ENCODE measurements at regions of chr9 and their contacts with region 1.

Region 1: DNA sequence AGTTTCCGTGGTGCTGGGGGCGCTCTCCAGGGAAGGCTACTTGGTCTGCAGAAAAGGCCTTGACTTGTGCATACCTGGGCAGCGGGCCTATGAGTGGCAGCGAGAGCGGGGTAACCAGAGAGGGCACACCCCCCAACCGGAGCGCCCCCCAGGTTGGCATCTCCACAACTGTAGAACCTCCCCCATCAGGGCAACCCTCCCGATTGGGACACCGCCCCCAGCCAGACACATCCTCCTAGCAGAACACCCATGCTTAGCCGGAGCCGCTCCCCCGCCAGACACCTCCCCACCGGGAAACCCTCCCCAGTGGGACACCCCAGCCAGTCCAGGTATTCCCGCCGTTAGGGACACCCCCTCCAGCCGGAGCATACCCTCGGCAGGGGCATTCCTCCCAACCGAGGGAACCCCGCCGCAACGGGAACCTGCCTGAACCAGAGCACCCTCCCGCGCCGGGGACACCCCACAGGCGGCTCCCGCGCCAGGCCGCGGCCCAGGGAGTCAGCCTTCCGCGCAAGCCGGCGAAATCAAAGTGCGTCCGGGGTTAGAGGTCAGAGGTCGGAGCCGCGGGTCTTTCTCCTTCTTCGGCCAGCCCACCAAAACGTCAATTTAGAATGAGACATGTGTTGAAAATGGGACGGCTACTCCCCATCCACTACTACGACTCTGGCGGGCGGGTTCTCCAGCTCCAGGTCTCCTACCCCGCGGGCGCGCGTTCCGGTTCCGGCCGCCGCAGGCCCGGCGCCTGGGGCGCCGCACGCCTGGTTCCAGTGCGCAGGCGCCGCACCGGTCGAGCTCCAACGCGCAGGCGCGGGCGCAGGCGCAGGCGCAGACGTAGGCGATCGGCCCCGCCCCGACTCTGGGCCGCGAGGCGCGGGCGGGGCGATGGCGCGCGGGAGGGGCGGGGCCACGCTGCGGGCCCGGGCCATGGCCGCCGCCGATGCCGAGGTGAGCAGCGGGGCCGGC is at the start of gene EHMT1:
- DNase-seq: peak; percentile 83 to 95 (median 89)
- ATAC-seq: peak; percentile 65 to 86 (median 84)
- H3K4me3 ChIP-seq: peak within 1 kb of the TSS; percentile 77 to 100 (median 90)
- H3K27ac ChIP-seq: peak within 1 kb of the TSS; percentile 88 to 96 (median 92)
- H3K4me1 ChIP-seq: peaks cover 4 to 56% (median 39%) of the 10 kb centered on the region in 12 donors
- H3K27me3 ChIP-seq: no peaks in the 10 kb centered on the region
- CTCF ChIP-seq: peak in 1 of 12 donors; percentile 6
- POLR2A ChIP-seq: peak in 1 of 2 donors; percentile 58
- total RNA-seq, gene EHMT1: 27.8 to 55.9 (median 32.0) TPM

Region 2: GRCh38 chr9:136694236-136694942 is 924.0 kb before region 1 on chr9:
- intact Hi-C with region 1: no loop called
- DNase-seq: peak in 2 of 5 donors; percentile 64 to 77
- ATAC-seq: peak in 3 of 4 donors; percentile 43 to 57 (median 50)
- H3K4me3 ChIP-seq: no peak overlapping the region
- H3K27ac ChIP-seq: no peak overlapping the region
- H3K4me1 ChIP-seq: peaks cover 3 to 51% (median 30%) of the 10 kb centered on the region in 12 donors
- H3K27me3 ChIP-seq: no peaks in the 10 kb centered on the region
- CTCF ChIP-seq: peak; percentile 60 to 81 (median 73)
- POLR2A ChIP-seq: no peak

Region 3: DNA sequence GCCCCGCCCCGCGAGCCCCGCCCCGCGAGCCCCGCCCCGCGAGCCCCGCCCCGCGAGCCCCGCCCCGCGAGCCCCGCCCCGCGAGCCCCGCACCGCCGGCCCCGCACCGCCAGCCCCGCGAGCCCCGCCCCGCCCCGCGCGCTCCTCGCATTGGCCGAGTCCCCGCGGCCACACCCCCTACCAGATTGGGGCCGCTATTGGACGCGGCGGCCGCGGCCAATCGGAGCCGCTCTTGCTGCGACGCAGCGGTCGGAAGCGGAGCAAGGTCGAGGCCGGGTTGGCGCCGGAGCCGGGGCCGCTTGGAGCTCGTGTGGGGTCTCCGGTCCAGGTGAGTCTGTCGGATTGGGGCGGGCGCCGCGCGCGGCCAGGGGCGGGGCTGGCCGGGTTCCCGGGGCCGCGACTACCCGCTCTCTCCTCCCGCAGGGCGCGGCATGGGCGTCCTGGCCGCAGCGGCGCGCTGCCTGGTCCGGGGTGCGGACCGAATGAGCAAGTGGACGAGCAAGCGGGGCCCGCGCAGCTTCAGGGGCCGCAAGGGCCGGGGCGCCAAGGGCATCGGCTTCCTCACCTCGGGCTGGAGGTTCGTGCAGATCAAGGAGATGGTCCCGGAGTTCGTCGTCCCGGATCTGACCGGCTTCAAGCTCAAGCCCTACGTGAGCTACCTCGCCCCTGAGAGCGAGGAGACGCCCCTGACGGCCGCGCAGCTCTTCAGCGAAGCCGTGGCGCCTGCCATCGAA is 66.6 kb before region 1 on chr9 and contains the start of gene MRPL41:
- intact Hi-C with region 1: loop called in 1 of 10 experiments (anchors 2 kb)
- DNase-seq: peak; percentile 90 to 96 (median 94)
- ATAC-seq: peak; percentile 63 to 84 (median 77)
- H3K4me3 ChIP-seq: peak within 1 kb of the TSS; percentile 61 to 99 (median 81)
- H3K27ac ChIP-seq: peak within 1 kb of the TSS; percentile 84 to 99 (median 95)
- H3K4me1 ChIP-seq: peaks cover 0 to 35% (median 14%) of the 10 kb centered on the region in 12 donors
- H3K27me3 ChIP-seq: no peaks in the 10 kb centered on the region
- CTCF ChIP-seq: no peak
- POLR2A ChIP-seq: peak; percentile 96
- total RNA-seq, gene MRPL41: 118 to 389 (median 196) TPM

Region 4: DNA sequence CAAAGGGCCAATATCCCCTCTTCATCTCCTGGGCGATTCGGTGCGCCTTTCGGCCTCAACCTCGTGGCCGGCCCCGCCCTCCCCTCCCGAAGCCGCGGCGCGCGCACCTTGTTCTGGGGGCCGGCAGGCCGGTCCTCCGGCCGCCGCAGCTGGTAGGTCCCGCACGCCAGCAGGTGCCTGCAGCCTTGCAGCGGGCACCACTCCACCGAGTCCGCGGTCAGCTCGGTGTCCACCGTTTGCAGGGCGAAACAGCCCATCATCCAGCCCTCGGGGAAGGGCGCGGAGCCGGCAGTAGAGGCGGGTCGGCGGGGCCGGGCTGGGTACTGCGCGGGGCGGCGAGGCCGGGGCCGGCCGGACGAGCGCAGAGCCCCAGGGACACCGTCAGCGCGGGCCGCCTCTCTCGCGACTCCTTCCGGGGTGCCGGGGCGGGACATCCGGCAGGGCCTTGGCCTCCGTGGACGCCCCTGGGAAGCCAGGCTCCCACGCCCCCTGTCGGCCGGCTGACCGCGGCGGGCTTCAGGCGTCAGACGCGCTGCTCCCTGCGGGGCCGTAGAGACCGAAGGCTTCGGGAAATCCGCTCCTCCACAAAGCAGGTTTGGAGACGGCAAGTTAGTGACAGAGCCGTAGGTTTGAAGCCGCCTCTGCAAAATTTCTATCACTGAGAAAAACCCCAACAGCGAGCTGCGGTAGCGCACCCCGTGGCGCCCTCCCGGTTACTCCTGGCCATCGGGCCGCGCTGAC is 39.7 kb before region 1 on chr9 and contains the start of gene DPH7:
- intact Hi-C with region 1: loop called in 2 of 10 experiments (anchors 2 to 5 kb)
- DNase-seq: peak; percentile 96 to 99 (median 97)
- ATAC-seq: peak; percentile 83 to 95 (median 93)
- H3K4me3 ChIP-seq: peak within 1 kb of the TSS; percentile 63 to 99 (median 82)
- H3K27ac ChIP-seq: peak within 1 kb of the TSS; percentile 51 to 91 (median 85)
- H3K4me1 ChIP-seq: peaks cover 7 to 59% (median 40%) of the 10 kb centered on the region in 12 donors
- H3K27me3 ChIP-seq: no peaks in the 10 kb centered on the region
- CTCF ChIP-seq: peak; percentile 91 to 99 (median 97)
- POLR2A ChIP-seq: peak in 1 of 2 donors; percentile 82
- total RNA-seq, gene DPH7: 12.6 to 22.0 (median 16.7) TPM

Region 5: GRCh38 chr9:137605121-137606004 is 13.0 kb before region 1 on chr9 and contains the start of gene ARRDC1:
- intact Hi-C with region 1: loop called in 1 of 10 experiments (anchors 1 kb)
- DNase-seq: peak; percentile 93 to 96 (median 95)
- ATAC-seq: peak; percentile 81 to 90 (median 87)
- H3K4me3 ChIP-seq: peak within 1 kb of the TSS; percentile 61 to 91 (median 81)
- H3K27ac ChIP-seq: peak within 1 kb of the TSS; percentile 74 to 94 (median 90)
- H3K4me1 ChIP-seq: peaks cover 7 to 52% (median 23%) of the 10 kb centered on the region in 12 donors
- H3K27me3 ChIP-seq: no peaks in the 10 kb centered on the region
- CTCF ChIP-seq: no peak
- POLR2A ChIP-seq: peak in 1 of 2 donors; percentile 79
- total RNA-seq, gene ARRDC1: 14.1 to 43.6 (median 20.7) TPM

Region 6: DNA sequence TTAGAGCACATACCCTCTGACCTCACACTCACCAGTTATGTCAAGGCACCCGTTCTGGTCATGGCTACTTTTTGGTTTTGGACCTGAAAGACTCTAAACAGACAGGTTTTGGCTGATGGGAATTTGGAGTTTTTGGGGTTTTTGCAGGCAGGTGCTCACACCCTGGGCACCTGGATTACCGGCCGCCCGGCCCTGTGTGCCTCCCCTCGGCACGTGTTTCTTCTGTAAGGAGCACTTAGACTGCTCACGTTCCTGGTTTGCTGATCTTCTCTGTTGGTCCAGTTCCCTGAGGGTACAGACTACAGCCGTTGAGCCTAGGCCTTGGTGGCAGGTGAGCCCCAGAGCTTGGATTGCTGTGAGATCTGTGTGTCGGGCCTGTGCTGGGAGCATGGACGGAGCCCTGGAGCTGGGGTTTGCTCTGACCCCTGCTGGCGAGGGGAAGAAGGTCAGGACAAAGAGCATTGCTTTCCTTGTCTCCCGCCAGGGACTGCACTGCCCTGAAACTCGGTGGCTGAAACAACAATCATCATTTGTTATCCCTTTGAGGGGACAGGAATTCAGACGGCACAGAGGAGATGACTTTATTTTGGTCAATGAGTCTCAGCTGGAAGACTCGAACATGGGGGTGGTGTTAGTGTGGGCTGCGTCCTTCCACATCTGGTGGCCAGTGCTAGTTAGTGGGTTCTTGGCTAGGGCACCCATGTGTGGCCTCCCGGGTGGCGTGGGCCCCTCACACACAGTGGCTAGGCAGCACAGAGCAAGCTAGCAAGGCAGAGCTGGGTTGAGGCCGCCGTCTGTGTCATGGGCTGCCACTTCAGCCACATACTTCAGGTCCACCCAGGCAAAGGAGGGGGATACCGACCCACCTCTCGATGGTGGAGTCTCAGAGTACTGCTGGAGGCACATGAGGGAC is 76.8 kb after region 1 on chr9:
- intact Hi-C with region 1: no loop called
- DNase-seq: peak; percentile 45 to 71 (median 56)
- ATAC-seq: peak; percentile 68 to 89 (median 88)
- H3K4me3 ChIP-seq: no peak overlapping the region
- H3K27ac ChIP-seq: no peak overlapping the region
- H3K4me1 ChIP-seq: peaks cover 0 to 54% (median 36%) of the 10 kb centered on the region in 12 donors
- H3K27me3 ChIP-seq: no peaks in the 10 kb centered on the region
- CTCF ChIP-seq: peak; percentile 57 to 74 (median 67)
- POLR2A ChIP-seq: no peak